Activated B cell treated with CpG ODN at 0.5 μM for 24 hours (primary cell): ENCODE measurements at regions of chr10 and their contacts with region 1.

Region 1: DNA sequence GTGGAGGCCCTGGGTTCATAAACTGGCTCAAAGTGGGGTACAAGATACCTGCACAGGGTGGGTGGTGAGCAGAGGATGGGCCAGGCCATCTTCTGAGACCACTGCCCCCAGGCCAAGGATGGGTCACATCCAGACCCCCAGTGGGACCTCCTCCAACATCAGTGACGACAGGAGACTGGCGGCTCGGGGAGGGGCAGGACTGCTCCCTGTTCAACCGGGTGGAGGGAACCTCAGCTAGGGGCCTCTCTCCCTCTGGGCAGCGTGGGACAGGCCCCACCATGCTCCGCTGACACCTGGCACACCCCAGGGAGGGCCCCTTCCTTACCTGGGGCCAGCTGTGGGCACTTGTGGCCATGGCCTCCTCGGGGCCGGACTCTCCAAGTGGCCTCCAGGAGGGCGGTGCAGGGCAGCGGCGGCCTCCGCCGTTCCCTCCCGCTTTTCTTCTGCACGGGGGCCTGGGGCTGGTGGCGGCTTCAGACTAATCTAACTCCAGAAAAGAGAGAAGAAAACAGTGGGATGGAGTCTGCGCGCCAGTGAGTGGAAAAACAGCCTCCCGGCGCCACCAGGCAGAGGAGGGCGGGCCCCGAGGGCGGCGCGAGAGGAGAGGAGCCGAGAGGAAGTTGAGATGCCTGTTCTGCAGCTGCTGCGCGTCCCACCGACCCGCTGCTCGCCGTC is at the start of gene CALHM2:
- DNase-seq: peak; percentile 55
- ATAC-seq: peak; percentile 86
- H3K4me3 Mint-ChIP-seq: peak within 1 kb of the TSS; percentile 90
- H3K27ac Mint-ChIP-seq: peak within 1 kb of the TSS; percentile 85
- H3K4me1 Mint-ChIP-seq: peaks cover 46% of the 10 kb centered on the region
- H3K27me3 Mint-ChIP-seq: peaks cover 2% of the 10 kb centered on the region
- CTCF ChIP-seq: no peak
- total RNA-seq, gene CALHM2: 17.5 and 21.4 TPM in 2 replicates

Region 2: DNA sequence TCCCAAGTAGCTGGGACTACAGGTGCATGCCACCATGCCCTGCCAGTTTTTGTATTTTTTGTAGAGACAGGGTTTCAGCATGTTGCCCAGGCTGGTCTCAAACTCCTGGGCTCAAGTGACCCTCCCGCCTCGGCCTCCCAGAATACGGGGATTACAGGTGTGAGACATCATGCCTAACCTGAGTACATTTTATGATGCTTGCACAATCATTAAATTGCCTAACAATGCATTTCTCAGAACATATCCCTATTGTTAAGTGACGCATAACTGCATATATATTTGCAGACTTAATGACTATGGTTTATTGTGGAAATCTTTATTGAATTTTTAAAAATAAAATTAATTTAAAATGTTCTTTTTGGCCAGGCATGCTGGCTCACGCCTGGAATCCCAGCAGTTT is 144.4 kb before region 1 on chr10:
- CTCF ChIA-PET with region 1: no interaction called
- POLR2A ChIA-PET with region 1: no interaction called
- intact Hi-C with region 1: no loop called
- DNase-seq: no peak
- ATAC-seq: no peak
- H3K4me3 Mint-ChIP-seq: no peak overlapping the region
- H3K27ac Mint-ChIP-seq: no peak overlapping the region
- H3K4me1 Mint-ChIP-seq: no peaks in the 10 kb centered on the region
- H3K27me3 Mint-ChIP-seq: no peaks in the 10 kb centered on the region
- CTCF ChIP-seq: no peak

Region 3: DNA sequence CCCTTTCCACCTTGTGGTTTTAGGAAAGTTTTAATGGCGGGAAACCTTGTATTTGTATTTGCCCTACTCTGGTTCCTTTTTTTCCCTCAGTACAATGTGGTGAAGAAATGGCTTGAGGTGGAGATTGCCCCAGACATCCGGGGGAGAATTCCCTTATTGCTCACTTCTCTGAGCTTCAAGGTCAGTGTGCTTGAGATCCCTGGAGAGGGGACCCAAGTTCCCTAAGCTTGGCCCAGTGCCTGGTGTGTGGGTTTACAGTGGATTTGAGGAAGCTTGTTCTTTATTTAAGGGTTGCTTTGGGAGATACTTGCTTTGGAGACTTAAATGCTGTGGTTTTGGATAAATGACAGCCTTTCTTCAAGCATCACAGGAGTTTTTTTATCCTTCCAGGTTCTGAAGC is 18.1 kb before region 1 on chr10:
- CTCF ChIA-PET with region 1: no interaction called
- POLR2A ChIA-PET with region 1: no interaction called
- intact Hi-C with region 1: no loop called
- DNase-seq: no peak
- ATAC-seq: no peak
- H3K4me3 Mint-ChIP-seq: no peak overlapping the region
- H3K27ac Mint-ChIP-seq: no peak overlapping the region
- H3K4me1 Mint-ChIP-seq: no peaks in the 10 kb centered on the region
- H3K27me3 Mint-ChIP-seq: no peaks in the 10 kb centered on the region
- CTCF ChIP-seq: no peak

Region 4: DNA sequence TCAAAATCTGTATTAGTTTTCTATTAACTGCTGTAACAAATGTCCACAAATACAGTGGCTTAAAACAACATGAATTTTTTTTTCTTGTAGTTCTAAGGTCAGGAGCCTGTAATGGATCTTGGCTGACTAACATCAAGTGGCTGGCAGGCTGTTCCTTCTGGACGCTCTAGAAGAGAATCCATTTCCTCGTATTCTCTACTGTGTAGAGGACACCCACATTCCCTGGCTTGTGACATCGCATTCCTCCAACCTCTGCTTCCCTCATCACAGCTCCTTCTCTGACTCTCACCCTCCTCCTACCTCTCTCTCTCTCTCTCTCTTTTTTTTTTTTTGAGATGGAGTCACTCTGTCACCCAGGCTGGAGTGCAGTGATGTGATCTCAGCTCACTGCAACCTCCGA is 11.5 kb after region 1 on chr10:
- CTCF ChIA-PET with region 1: no interaction called
- POLR2A ChIA-PET with region 1: interaction called, 17 read pairs
- intact Hi-C with region 1: no loop called
- DNase-seq: no peak
- ATAC-seq: no peak
- H3K4me3 Mint-ChIP-seq: no peak overlapping the region
- H3K27ac Mint-ChIP-seq: no peak overlapping the region
- H3K4me1 Mint-ChIP-seq: peaks cover 35% of the 10 kb centered on the region
- H3K27me3 Mint-ChIP-seq: no peaks in the 10 kb centered on the region
- CTCF ChIP-seq: no peak

Region 5: DNA sequence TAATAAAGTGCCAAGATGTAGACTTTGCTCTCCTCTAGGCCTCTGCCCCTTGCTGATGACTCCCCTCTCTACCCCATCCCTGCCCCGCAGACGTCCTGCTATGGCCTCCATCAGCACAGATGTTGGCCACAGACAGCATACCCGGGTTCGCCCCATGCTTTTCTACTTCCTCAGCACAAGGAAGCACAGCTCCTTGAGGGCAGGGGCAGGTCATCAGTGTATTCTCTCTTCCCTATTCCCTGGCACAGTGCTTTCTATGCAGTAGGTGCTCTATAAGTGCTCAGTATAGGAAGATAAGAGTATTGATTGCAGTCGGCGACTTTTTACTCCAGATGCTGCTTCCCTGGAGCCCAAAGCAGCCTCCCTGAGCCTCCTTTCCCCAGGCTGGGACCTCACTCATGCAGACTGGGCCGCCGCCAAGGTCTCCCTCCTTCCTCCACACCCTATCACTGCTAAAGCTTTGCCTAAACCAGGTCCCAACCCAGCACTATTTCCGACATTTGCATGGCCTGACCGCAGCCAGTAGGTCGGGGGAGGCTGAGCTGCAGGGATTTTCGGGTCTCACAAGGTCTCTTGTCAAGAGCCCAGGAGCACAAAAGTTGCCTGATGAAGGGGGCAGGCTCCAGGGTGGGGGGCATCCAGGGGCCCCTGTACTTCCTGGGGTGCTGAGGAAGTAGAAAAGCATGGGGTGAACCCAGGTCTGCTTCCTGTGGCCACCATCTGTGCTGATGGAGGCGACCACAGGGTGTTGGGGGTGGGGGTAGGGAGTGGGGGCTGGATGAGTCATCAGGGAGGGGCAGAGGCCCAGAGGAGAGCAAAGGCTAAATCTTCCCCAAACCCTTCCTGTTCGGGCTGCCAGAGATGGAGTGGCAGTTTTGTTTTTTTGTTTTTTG is 19.0 kb after region 1 on chr10:
- CTCF ChIA-PET with region 1: interaction called, 19 read pairs
- POLR2A ChIA-PET with region 1: interaction called, 58 read pairs
- intact Hi-C with region 1: loop called (anchors 1 kb)
- DNase-seq: peak; percentile 70
- ATAC-seq: peak; percentile 76
- H3K4me3 Mint-ChIP-seq: peak overlapping the region; percentile 75
- H3K27ac Mint-ChIP-seq: peak overlapping the region; percentile 96
- H3K4me1 Mint-ChIP-seq: peaks cover 72% of the 10 kb centered on the region
- H3K27me3 Mint-ChIP-seq: no peaks in the 10 kb centered on the region
- CTCF ChIP-seq: no peak

Region 6: GRCh38 chr10:103476046-103476995 is 24.4 kb after region 1 on chr10:
- CTCF ChIA-PET with region 1: interaction called, 19 read pairs
- POLR2A ChIA-PET with region 1: interaction called, 58 read pairs
- intact Hi-C with region 1: loop called (anchors 1 kb)
- DNase-seq: no peak
- ATAC-seq: no peak
- H3K4me3 Mint-ChIP-seq: no peak overlapping the region
- H3K27ac Mint-ChIP-seq: no peak overlapping the region
- H3K4me1 Mint-ChIP-seq: peaks cover 26% of the 10 kb centered on the region
- H3K27me3 Mint-ChIP-seq: no peaks in the 10 kb centered on the region
- CTCF ChIP-seq: no peak